Uterus (tissue), 4 donors: ENCODE measurements at regions of chr9 and their contacts with region 1.

Region 1: DNA sequence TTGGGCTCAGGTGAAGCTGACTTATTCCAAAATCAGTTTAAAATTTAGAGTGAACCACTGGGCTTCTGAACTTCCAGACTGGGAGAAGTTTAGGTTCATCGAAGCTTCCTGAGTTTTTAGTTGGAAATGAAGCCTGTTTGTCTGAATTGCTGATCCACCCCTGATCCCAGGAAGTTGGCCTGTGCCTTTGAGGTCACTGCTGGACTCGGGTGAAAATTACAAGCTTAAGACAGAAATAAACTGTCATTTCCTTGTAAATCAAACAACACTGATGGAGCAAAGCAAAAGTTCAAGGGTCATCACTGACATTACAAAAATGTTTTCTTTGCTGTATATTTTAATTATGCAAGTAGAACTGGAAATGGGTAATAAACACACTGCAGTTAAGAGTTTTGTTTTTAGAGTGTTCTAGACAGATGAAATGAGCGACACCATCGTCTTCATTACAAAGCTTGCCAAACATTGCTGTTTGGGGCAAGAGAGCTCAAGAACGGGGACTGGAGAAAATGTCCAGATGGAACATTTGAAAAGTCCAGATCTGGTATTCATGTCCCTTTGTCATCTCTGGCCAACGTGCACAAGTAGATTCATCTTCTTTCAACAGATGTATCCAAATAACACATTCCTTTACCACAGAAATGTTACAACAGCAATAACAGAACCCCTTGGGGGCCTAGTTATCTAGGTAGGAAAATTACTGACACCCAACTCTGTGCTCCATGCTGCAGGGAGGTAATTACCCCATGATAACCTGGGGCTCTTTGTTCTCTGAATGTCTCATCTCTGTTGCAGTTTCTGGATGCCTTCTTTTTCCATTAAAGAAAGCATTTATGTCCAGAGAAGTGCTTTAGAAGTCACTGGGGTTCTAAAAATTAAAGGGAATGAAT is 142.4 kb upstream of the ERCC6L2 start:
- DNase-seq: no peak
- H3K4me3 ChIP-seq: no peak overlapping the region
- H3K27ac ChIP-seq: no peak overlapping the region
- H3K4me1 ChIP-seq: no peaks in the 10 kb centered on the region
- H3K27me3 ChIP-seq: no peaks in the 10 kb centered on the region
- CTCF ChIP-seq: no peak
- POLR2A ChIP-seq: no peak

Region 2: DNA sequence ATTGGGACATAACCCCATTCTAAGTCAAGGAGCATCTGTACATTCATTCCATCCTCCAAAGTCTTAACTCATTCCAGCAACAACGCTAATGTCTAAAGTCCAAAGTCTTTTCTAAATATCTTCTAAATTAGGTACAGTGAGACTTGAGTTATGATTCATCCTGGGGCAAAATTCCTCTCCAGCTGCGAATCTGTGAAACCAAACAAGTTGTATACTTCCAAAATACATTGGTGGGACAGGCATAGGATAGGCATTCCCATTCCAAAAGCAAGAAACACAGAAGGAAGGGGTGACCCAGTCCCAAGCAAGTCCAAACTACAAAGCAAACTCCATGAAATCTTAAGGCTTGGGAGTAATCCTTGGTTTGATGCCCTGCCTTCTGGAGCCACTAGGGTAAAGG is 317.9 kb before region 1 on chr9:
- intact Hi-C with region 1: no loop called
- DNase-seq: no peak
- H3K4me3 ChIP-seq: no peak overlapping the region
- H3K27ac ChIP-seq: no peak overlapping the region
- H3K4me1 ChIP-seq: no peaks in the 10 kb centered on the region
- H3K27me3 ChIP-seq: no peaks in the 10 kb centered on the region
- CTCF ChIP-seq: no peak
- POLR2A ChIP-seq: no peak

Region 3: DNA sequence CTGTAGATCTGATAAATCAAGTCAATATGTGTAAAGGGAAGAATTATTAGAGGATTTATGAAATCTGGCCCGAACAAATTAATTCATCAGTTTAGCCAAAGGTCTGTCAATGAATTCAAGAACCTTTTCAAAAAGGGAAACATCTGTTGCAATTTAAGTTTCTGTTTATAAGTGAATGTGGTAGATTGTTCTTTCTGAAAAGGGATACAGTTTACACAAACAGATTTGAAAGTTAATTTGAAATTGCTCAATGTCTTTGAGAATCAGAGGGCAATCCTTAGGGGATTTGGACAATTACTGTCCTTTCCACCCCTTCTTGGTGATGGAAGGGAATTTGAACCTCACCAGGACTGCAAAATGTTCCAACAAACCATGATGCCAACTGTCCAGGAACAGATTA is 112.7 kb after region 1 on chr9:
- intact Hi-C with region 1: loop called (anchors 5 kb)
- DNase-seq: no peak
- H3K4me3 ChIP-seq: no peak overlapping the region
- H3K27ac ChIP-seq: no peak overlapping the region
- H3K4me1 ChIP-seq: no peaks in the 10 kb centered on the region
- H3K27me3 ChIP-seq: no peaks in the 10 kb centered on the region
- CTCF ChIP-seq: no peak
- POLR2A ChIP-seq: no peak